ENCODE measurements at regions of chr6 and their contacts with region 1.

Region 1: GRCh38 chr6:15653581-15653980 is 9.2 kb downstream of the DTNBP1 start:
- DNase-seq: no peak
- H3K4me3 ChIP-seq: no peak overlapping the region
- H3K27ac ChIP-seq: no peak overlapping the region
- H3K4me1 ChIP-seq: no peaks in the 10 kb centered on the region
- H3K27me3 ChIP-seq: no peaks in the 10 kb centered on the region
- CTCF ChIP-seq: no peak

Region 2: DNA sequence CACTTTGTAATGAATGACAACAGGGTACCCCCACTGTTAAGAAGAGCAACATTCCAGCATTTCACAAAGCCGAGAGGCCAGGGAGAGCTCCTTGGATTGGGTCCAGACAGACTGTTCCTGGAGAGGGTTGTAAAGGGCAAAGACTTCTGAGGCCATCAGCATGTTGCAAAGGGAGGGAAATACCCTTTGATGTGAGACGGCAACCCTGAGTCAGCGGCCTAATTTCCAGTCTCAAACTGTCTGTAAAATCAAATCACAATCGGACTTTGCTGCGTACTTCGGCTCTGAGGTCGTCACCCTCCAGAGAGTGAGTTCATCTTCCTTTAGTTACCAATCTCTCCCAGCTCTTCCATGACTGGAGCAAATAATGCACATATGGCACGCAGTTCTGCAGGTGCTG is 110.3 kb after region 1 on chr6:
- CTCF ChIA-PET with region 1: no interaction called
- POLR2A ChIA-PET with region 1: no interaction called
- intact Hi-C with region 1: no loop called
- DNase-seq: no peak
- H3K4me3 ChIP-seq: no peak overlapping the region
- H3K27ac ChIP-seq: no peak overlapping the region
- H3K4me1 ChIP-seq: no peaks in the 10 kb centered on the region
- H3K27me3 ChIP-seq: no peaks in the 10 kb centered on the region
- CTCF ChIP-seq: no peak

Region 3: DNA sequence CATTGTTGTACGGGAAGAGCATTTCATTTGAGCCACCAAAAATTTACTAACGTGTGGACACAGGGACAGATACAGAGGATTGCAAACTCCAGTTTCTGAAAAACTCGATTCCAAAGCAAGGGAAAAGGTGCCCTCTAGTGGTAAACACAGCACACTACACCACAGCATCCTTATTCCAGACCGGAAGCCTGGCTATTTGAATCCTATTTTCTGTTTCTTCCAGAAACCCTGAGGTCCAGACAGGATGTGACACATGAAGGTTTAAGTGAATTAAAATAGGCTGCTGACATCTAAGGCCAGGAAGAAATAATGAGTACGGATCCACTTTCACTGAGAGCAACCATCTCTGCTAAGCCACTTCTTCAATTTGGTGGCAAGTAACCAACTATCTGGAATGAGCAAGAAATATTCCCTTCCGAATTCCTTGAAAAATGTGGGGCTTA is 553.0 kb after region 1 on chr6:
- CTCF ChIA-PET with region 1: interaction called, 11 read pairs
- POLR2A ChIA-PET with region 1: no interaction called
- intact Hi-C with region 1: no loop called
- DNase-seq: peak; percentile 87
- H3K4me3 ChIP-seq: no peak overlapping the region
- H3K27ac ChIP-seq: no peak overlapping the region
- H3K4me1 ChIP-seq: peaks cover 16% of the 10 kb centered on the region
- H3K27me3 ChIP-seq: no peaks in the 10 kb centered on the region
- CTCF ChIP-seq: peak; percentile 95